Activated T-helper 1 cell treated with anti-CD3 and anti-CD28 coated beads, Interleukin-12 subunit alpha, Interleukin-12 subunit beta, Interleukin-2, Interleukin-4 antibody, amounts not matched to agents 30 ng/mL and 10 ng/mL and 1 ng/mL, durations not matched to agents 14 hours and 24 hours and 36 hours (primary cell): ENCODE measurements at regions of chr9 and their contacts with region 1.

Region 1: GRCh38 chr9:123562844-123563346 is 206.9 kb downstream of the CRB2 start:
- DNase-seq: no peak
- H3K4me3 Mint-ChIP-seq: no peak overlapping the region
- H3K27ac Mint-ChIP-seq: peak overlapping the region; percentile 28
- H3K4me1 Mint-ChIP-seq: peaks cover 21% of the 10 kb centered on the region
- H3K27me3 Mint-ChIP-seq: no peaks in the 10 kb centered on the region

Region 2: DNA sequence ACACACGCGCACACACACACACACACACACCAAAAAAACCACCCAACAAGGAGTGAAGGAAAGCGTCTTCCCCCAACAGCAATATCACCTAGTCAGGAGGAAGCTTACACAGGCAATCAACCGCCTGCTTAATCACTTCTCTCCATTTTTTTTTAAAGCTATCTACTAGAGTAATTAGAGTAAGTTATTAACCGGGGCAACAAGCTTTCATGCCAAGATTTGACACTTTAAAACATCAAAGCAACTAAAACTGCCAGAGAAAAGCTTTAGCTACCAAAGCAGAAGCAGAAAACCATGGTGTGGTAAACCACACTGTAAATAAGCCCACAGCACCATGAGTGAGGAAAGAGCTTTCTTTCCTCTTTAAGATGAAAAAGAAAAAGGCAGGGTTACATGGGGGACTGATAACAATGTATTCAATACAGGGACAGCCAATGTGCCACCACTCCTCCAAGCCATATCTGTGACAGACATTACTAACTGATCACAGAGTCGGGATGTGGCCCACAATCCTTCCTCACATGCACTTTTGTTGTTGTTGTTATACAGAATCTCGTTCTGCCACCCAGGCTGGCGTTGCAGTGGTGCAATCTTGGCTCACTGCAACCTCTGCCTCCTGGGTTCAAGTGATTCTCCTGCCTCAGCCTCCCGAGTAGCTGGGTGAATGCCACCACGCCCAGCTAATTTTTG is 75.2 kb after region 1 on chr9:
- intact Hi-C with region 1: loop called (anchors 5 kb)
- DNase-seq: peak; percentile 26
- H3K4me3 Mint-ChIP-seq: peak overlapping the region; percentile 72
- H3K27ac Mint-ChIP-seq: peak overlapping the region; percentile 64
- H3K4me1 Mint-ChIP-seq: peaks cover 36% of the 10 kb centered on the region
- H3K27me3 Mint-ChIP-seq: peaks cover 36% of the 10 kb centered on the region